ENCODE measurements at regions of chr4 and their contacts with region 1.

Region 1: DNA sequence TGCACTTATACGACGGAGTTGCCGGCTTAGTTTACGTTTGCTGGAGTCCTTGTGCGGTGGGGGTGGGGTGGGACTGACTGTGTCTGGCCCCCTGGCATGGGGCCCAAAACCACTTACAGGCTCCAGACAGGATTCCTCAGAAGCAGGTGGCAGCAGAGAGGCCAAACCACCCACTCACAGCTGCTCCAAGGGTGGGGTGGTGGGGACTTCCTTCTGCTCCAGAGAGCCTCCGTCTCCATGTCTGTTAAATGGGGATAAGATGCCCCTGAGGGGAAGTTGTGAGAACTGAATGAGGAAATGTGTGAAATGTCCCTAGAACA is 36.7 kb downstream of the PSAPL1 start:
- DNase-seq: peak; percentile 83
- H3K4me3 ChIP-seq: no peak overlapping the region
- H3K27ac ChIP-seq: peak overlapping the region; percentile 41
- H3K4me1 ChIP-seq: peaks cover 39% of the 10 kb centered on the region
- H3K27me3 ChIP-seq: no peaks in the 10 kb centered on the region
- CTCF ChIP-seq: peak in 1 of 2 donors; percentile 48

Region 2: GRCh38 chr4:7328898-7329638 is 69.0 kb before region 1 on chr4:
- CTCF ChIA-PET with region 1: no interaction called
- dilution Hi-C with region 1: loop called (anchors 5 kb)
- in situ Hi-C with region 1: no loop called
- intact Hi-C with region 1: no loop called
- DNase-seq: peak; percentile 35
- H3K4me3 ChIP-seq: no peak overlapping the region
- H3K27ac ChIP-seq: no peak overlapping the region
- H3K4me1 ChIP-seq: peaks cover 8% of the 10 kb centered on the region
- H3K27me3 ChIP-seq: no peaks in the 10 kb centered on the region
- CTCF ChIP-seq: peak in 1 of 2 donors; percentile 23

Region 3: DNA sequence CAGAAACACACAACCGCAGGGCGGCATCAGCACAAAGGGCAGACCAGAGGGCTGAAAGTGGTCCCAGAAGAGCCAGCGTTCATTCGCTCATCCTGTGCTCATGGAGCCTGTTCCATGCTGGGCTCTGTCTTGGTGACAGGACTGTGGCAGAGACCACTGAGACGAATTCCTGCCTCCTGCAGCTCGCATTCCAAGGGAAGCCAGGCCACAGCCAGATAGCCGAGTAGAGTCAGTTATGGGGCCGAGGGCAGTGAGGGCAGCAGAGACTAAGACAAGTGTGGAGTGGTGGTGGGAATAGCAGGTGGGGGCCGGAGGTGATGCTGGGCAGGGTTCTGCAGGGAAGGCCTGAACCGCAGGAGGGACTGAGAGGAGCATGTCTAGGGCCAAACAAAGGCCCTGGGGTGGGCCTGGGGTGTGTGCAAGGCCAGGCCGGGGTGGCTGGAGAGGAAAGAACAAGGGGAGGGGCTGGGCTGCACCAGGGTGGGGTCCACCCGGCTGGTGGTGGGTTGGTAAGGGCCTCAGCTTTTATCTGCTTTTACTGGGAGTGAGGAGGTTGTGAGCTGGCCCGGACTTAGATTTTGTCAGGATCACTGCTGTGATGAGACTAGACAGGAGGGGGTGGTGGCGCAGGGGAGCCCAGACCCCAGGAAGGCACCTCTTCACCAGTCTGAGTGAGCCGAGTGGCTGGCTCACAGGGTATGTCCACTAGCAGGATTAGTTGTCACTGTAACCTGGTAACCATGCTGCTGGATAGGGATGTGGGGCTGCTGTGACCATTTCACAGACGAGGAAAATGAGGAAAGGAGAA is 30.4 kb after region 1 on chr4:
- CTCF ChIA-PET with region 1: no interaction called
- dilution Hi-C with region 1: loop called (anchors 5 kb)
- in situ Hi-C with region 1: no loop called
- intact Hi-C with region 1: loop called (anchors 2 kb)
- DNase-seq: no peak
- H3K4me3 ChIP-seq: no peak overlapping the region
- H3K27ac ChIP-seq: no peak overlapping the region
- H3K4me1 ChIP-seq: peaks cover 33% of the 10 kb centered on the region
- H3K27me3 ChIP-seq: no peaks in the 10 kb centered on the region
- CTCF ChIP-seq: no peak

Region 4: GRCh38 chr4:7546809-7547367 is 148.8 kb after region 1 on chr4:
- CTCF ChIA-PET with region 1: no interaction called
- dilution Hi-C with region 1: no loop called
- in situ Hi-C with region 1: no loop called
- intact Hi-C with region 1: loop called (anchors 5 kb)
- DNase-seq: peak; percentile 24
- H3K4me3 ChIP-seq: peak overlapping the region in 1 of 3 experiments; percentile 8
- H3K27ac ChIP-seq: peak overlapping the region; percentile 37
- H3K4me1 ChIP-seq: peaks cover 21% of the 10 kb centered on the region
- H3K27me3 ChIP-seq: no peaks in the 10 kb centered on the region
- CTCF ChIP-seq: no peak

Region 5: GRCh38 chr4:7719354-7720174 is 321.5 kb after region 1 on chr4:
- CTCF ChIA-PET with region 1: no interaction called
- dilution Hi-C with region 1: no loop called
- in situ Hi-C with region 1: no loop called
- intact Hi-C with region 1: loop called (anchors 5 kb)
- DNase-seq: peak; percentile 12
- H3K4me3 ChIP-seq: no peak overlapping the region
- H3K27ac ChIP-seq: no peak overlapping the region
- H3K4me1 ChIP-seq: no peaks in the 10 kb centered on the region
- H3K27me3 ChIP-seq: no peaks in the 10 kb centered on the region
- CTCF ChIP-seq: peak; percentile 68 to 86

Measured in mammary epithelial cell (primary cell).